ENCODE measurements at regions of chr3 and their contacts with region 1.

Region 1: GRCh38 chr3:136042608-136043221 is 77.2 kb downstream of the PPP2R3A start:
- DNase-seq: no peak
- H3K4me3 ChIP-seq: no peak overlapping the region
- H3K27ac ChIP-seq: no peak overlapping the region
- H3K4me1 ChIP-seq: no peaks in the 10 kb centered on the region
- H3K27me3 ChIP-seq: no peaks in the 10 kb centered on the region
- CTCF ChIP-seq: peak; percentile 55 to 67 (median 58)
- POLR2A ChIP-seq: no peak

Region 2: DNA sequence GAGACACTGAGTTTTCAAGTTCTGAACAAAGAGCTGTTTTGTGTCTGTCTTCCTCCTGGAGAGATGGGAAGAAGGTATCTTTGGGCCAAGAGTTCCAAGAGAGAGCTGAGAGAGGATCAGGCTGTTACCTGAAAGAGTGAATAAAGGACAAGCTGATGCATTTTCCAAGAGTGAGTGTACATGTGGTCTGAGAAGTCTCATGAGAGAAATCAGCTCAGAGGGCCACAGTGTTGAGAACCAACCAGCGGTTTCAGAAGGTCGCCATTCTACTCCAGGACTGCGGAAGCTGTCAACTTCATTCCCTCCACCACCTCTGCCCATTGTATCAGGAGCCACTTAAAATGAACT is 119.8 kb before region 1 on chr3:
- intact Hi-C with region 1: loop called (anchors 5 kb)
- DNase-seq: no peak
- H3K4me3 ChIP-seq: no peak overlapping the region
- H3K27ac ChIP-seq: no peak overlapping the region
- H3K4me1 ChIP-seq: no peaks in the 10 kb centered on the region
- H3K27me3 ChIP-seq: no peaks in the 10 kb centered on the region
- CTCF ChIP-seq: no peak
- POLR2A ChIP-seq: no peak

Region 3: DNA sequence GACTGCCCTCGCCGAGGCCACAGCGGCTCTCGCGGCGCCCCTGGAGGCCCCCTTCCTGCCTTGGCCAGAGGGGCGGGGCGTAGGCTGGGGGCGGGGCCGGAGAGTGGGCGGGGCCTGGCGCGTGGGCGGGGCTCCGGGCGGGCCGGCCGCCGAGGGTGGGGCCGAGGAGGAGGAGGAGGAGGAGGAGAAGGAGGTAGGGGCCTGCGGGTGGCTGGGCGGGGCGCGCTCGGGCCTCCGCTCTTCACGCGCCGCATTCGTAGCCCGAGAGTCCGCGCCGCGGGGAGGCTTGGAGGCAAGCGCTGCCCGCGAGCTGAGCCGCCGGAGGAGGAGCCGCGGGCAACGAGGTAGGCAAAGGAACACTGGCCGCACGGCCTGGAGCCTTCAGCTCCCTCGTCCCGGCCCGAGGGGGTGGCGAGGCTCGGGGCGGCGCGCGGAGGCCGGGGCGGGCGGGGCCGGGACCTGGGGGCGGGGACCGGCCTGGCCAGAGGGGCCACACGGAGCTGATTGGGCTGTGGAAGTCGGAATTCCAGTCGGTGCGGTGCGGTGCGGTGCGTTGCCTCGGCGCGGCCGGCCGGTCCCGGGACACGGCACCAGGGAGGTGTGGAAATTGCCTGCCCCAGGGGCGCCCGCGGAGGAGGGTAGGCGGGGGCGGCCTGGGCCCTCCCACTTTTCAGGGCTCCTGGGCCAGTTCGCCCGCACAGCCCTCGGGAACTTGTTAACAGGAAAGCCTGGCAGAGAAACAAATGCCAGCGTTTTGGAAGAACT is 77.0 kb before region 1 on chr3 and contains the start of gene PPP2R3A:
- intact Hi-C with region 1: no loop called
- DNase-seq: peak; percentile 85 to 92
- H3K4me3 ChIP-seq: peak within 1 kb of the TSS; percentile 64 to 69
- H3K27ac ChIP-seq: peak within 1 kb of the TSS; percentile 93 to 96
- H3K4me1 ChIP-seq: no peaks in the 10 kb centered on the region
- H3K27me3 ChIP-seq: no peaks in the 10 kb centered on the region
- CTCF ChIP-seq: peak in 1 of 4 experiments; percentile 2
- POLR2A ChIP-seq: peak; percentile 31 to 78
- total RNA-seq, gene PPP2R3A: 8.5 to 22.9 (median 18.1) TPM